ENCODE measurements at regions of chr12 and their contacts with region 1.

Region 1: DNA sequence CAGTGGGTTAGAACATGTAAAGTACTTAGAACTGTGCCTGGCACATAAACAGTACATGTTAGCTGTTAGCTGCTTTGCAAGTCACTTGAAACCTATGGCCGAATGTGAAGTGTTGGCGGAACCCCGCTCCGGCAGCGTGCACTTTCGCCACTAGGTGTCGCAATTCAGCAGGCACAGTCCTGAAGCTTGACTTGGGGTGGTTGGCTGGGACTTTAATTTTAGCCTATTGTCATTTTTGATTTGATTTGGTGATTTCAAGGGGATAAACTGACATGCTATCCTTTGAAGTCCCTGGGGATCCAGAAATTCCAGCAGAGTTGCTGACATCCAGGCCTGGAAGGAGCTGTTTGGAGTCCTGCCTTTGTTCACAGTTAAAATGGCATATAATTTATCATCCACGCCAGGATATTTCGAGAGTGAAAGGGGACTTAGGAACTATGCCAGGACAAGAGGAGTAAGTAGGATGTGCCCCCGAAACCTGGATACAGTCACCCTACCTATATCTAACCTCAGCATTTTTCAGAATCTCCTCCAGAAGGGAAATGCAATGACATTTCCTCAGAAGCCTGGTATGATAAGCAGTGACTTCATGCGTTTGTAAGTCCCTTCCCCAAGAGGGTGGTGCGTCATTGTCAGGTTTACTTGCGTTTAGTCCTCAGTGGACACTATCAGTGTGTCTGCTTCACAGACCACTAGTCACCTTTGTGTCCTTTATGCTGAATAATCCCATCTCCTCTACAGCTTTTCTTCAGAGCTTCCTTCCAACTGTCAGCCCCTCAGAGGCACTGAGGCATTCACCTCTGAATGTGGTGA is 3.5 kb upstream of the TSPAN9 start:
- DNase-seq: peak; percentile 71
- ATAC-seq: peak; percentile 56
- H3K4me3 ChIP-seq: no peak overlapping the region
- H3K27ac ChIP-seq: no peak overlapping the region
- H3K4me1 ChIP-seq: peaks cover 55% of the 10 kb centered on the region
- H3K27me3 ChIP-seq: peaks cover 0 to 16% of the 10 kb centered on the region in 2 experiments; a peak in 2 of 5 replicates
- CTCF ChIP-seq: peak; percentile 96
- EP300 ChIP-seq: no peak
- POLR2A ChIP-seq: no peak
- RAD21 ChIP-seq: peak; percentile 91

Region 2: DNA sequence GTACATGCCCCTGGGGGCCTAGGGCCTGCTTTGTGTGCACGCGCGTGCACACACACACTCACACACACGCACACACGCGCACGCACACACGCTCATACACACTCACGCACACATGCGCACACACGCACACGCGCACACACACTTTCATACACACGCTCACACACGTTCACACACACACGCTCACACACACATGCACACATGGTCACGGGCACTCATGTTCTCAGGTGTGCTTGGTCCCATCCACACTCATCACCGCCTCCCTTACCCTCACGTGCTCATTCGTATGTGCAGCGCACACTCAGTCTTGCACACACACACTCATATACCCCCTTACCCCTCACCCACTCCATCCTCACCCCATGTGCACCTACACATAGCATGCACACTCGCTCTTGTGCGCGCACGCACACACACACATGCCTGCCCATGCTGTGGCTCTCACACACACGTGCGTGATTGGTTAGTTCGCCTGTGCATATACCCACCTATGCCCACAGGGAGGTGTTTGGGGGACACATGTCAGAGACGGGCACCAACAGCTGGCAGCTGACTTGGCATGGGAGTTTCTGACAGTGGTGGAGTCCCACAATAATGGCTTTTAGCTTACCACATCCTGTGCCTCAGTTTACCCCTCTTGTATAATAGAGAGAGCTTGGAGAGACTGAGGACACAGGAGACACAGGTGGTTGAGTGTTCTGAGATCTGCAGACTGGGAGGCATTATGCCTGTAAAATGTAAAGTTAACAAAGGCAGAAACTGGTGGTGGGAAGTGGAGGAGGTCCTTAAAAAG is 32.2 kb after region 1 on chr12:
- CTCF ChIA-PET with region 1: no interaction called
- POLR2A ChIA-PET with region 1: interaction called, 9 read pairs
- in situ Hi-C with region 1: no loop called
- intact Hi-C with region 1: loop called (anchors 2 kb)
- DNase-seq: no peak
- ATAC-seq: no peak
- H3K4me3 ChIP-seq: no peak overlapping the region
- H3K27ac ChIP-seq: peak overlapping the region; percentile 97
- H3K4me1 ChIP-seq: peaks cover 76% of the 10 kb centered on the region
- H3K27me3 ChIP-seq: no peaks in the 10 kb centered on the region
- CTCF ChIP-seq: no peak
- EP300 ChIP-seq: no peak
- POLR2A ChIP-seq: no peak
- RAD21 ChIP-seq: no peak

Region 3: GRCh38 chr12:3123729-3124128 is 50.1 kb after region 1 on chr12:
- CTCF ChIA-PET with region 1: no interaction called
- POLR2A ChIA-PET with region 1: no interaction called
- in situ Hi-C with region 1: no loop called
- intact Hi-C with region 1: no loop called
- DNase-seq: no peak
- ATAC-seq: no peak
- H3K4me3 ChIP-seq: no peak overlapping the region
- H3K27ac ChIP-seq: no peak overlapping the region
- H3K4me1 ChIP-seq: peaks cover 10% of the 10 kb centered on the region; the same call in 1 of the 2 replicates
- H3K27me3 ChIP-seq: no peaks in the 10 kb centered on the region
- CTCF ChIP-seq: no peak
- EP300 ChIP-seq: no peak
- POLR2A ChIP-seq: no peak
- RAD21 ChIP-seq: no peak

Region 4: GRCh38 chr12:3135522-3136461 is 62.1 kb after region 1 on chr12:
- CTCF ChIA-PET with region 1: no interaction called
- POLR2A ChIA-PET with region 1: no interaction called
- in situ Hi-C with region 1: no loop called
- intact Hi-C with region 1: loop called (anchors 2 kb)
- DNase-seq: peak; percentile 73
- ATAC-seq: peak; percentile 84
- H3K4me3 ChIP-seq: no peak overlapping the region
- H3K27ac ChIP-seq: no peak overlapping the region
- H3K4me1 ChIP-seq: peaks cover 5% of the 10 kb centered on the region; the same call in 1 of the 2 replicates
- H3K27me3 ChIP-seq: no peaks in the 10 kb centered on the region
- CTCF ChIP-seq: peak; percentile 92
- EP300 ChIP-seq: no peak
- POLR2A ChIP-seq: no peak
- RAD21 ChIP-seq: peak; percentile 93

Region 5: GRCh38 chr12:3202734-3203446 is 129.2 kb after region 1 on chr12:
- CTCF ChIA-PET with region 1: no interaction called
- POLR2A ChIA-PET with region 1: no interaction called
- in situ Hi-C with region 1: no loop called
- intact Hi-C with region 1: loop called (anchors 2 kb)
- DNase-seq: peak; percentile 28
- ATAC-seq: peak; percentile 63
- H3K4me3 ChIP-seq: no peak overlapping the region
- H3K27ac ChIP-seq: no peak overlapping the region
- H3K4me1 ChIP-seq: 0 out of 2 replicates have a peak, but pooled peaks cover 8% of the 10 kb centered on the region
- H3K27me3 ChIP-seq: no peaks in the 10 kb centered on the region
- CTCF ChIP-seq: peak; percentile 92
- EP300 ChIP-seq: no peak
- POLR2A ChIP-seq: no peak
- RAD21 ChIP-seq: peak; percentile 53; the same call in 1 of the 2 replicates

Region 6: DNA sequence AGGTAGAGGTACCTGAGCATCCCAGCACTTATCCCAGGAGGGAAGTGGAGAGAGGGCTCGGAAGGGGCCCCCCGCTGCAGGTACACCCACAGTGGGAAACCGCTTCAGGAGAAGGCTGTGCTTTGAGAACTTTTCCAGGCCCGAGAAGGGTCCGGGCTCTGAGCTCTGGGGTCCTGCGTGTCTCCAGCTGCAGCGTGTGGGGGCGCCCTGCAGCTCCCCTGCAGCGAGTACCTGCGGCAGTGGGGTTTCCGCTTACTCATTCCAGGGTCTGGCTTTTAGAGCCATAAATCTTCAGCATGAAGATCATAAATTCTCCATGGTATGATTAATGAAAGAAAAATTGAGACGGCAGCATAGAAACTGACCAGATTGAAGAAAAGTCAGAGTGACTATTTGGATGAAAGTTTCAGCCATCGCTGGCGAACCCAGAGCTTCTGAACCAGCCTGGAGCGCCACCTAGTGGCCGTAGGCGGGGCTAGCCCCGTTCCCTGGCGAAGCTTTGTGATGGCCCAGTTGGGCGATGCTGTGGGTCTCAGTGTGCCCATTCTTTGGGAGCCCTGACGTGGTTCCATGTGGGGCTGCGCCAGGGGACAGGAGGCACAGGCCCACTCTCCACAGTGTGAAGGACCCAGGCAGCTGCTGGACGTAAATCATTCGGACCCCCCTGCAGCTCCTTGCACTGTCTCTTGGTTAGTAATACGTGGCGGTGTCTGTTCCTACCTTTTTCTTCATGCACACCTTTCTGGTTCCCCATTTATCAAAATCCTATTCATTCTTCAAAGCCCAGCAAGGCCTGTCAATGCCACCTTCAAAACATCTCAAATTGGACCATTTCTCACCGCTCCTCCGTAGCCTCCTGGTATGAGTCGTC is 201.8 kb after region 1 on chr12:
- CTCF ChIA-PET with region 1: interaction called, 8 read pairs
- POLR2A ChIA-PET with region 1: no interaction called
- in situ Hi-C with region 1: loop called (anchors 10 kb)
- intact Hi-C with region 1: loop called (anchors 1 kb)
- DNase-seq: peak; percentile 31
- ATAC-seq: peak; percentile 86
- H3K4me3 ChIP-seq: no peak overlapping the region
- H3K27ac ChIP-seq: no peak overlapping the region
- H3K4me1 ChIP-seq: no peaks in the 10 kb centered on the region
- H3K27me3 ChIP-seq: no peaks in the 10 kb centered on the region
- CTCF ChIP-seq: peak; percentile 93
- EP300 ChIP-seq: no peak
- POLR2A ChIP-seq: no peak
- RAD21 ChIP-seq: peak; percentile 86